ENCODE measurements at regions of chr10 and their contacts with region 1.

Region 1: GRCh38 chr10:17430647-17431355 is 23.6 kb downstream of the ST8SIA6 start:
- DNase-seq: peak; percentile 51 to 89 (median 58)
- ATAC-seq: peak; percentile 48
- H3K4me3 ChIP-seq: no peak overlapping the region
- H3K27ac ChIP-seq: peak overlapping the region; percentile 27
- H3K4me1 ChIP-seq: peaks cover 43 to 77% of the 10 kb centered on the region in 2 experiments
- H3K27me3 ChIP-seq: no peaks in the 10 kb centered on the region
- CTCF ChIP-seq: peak; percentile 79 to 92 (median 88)
- EP300 ChIP-seq: no peak
- POLR2A ChIP-seq: no peak
- RAD21 ChIP-seq: peak; percentile 87 to 91

Region 2: DNA sequence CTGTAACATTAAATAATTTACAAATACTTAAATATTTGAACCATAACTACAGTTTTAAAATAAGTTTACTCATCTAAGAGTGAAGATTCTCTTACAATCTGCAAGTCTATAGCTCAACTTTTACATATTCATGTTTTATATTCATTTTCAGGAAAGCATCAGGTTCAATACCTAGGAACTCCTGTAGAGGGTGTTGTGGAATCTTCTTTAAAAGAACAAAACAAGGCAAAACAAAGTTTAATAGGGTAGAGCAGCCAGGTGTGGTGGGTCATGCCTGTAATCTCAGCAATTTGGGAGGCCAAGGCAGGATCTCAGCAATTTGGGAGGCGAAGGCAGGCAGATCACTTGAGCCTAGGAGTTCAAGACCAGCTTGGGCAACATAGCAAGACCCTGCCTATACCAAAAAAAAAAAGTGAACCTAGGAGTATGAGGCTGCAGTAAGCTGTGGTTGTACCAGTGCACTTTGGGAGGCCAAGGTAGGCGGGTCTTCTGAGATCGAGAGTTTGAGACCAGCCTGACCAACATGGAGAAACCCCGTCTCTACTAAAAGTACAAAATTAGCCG is 21.5 kb before region 1 on chr10:
- CTCF ChIA-PET with region 1: no interaction called
- POLR2A ChIA-PET with region 1: interaction called, 3 read pairs
- in situ Hi-C with region 1: no loop called
- intact Hi-C with region 1: loop called (anchors 1 kb)
- DNase-seq: peak in 2 of 4 experiments; percentile 34 to 62
- ATAC-seq: peak; percentile 67
- H3K4me3 ChIP-seq: no peak overlapping the region
- H3K27ac ChIP-seq: no peak overlapping the region
- H3K4me1 ChIP-seq: peaks cover 14 to 29% of the 10 kb centered on the region in 2 experiments; a peak in 4 of 5 replicates
- H3K27me3 ChIP-seq: no peaks in the 10 kb centered on the region
- CTCF ChIP-seq: peak; percentile 47 to 67 (median 50); a peak in 5 of 6 replicates
- EP300 ChIP-seq: no peak
- POLR2A ChIP-seq: no peak
- RAD21 ChIP-seq: peak; percentile 63 to 79

Region 3: GRCh38 chr10:17443707-17444387 is 13.0 kb after region 1 on chr10:
- CTCF ChIA-PET with region 1: interaction called, 4 read pairs
- POLR2A ChIA-PET with region 1: interaction called, 19 read pairs
- in situ Hi-C with region 1: no loop called
- intact Hi-C with region 1: no loop called
- DNase-seq: no peak
- ATAC-seq: peak; percentile 15
- H3K4me3 ChIP-seq: no peak overlapping the region
- H3K27ac ChIP-seq: peak overlapping the region; percentile 26; the same call in 2 of the 3 replicates
- H3K4me1 ChIP-seq: peaks cover 7 to 31% of the 10 kb centered on the region in 2 experiments; a peak in 3 of 5 replicates
- H3K27me3 ChIP-seq: no peaks in the 10 kb centered on the region
- CTCF ChIP-seq: no peak
- EP300 ChIP-seq: no peak
- POLR2A ChIP-seq: peak; percentile 54
- RAD21 ChIP-seq: no peak